Natural killer cell (primary cell): ENCODE measurements at regions of chr1 and their contacts with region 1.

Region 1: GRCh38 chr1:171841050-171841940 is at the start of gene DNM3:
- DNase-seq: peak; percentile 87 to 88
- ATAC-seq: peak; percentile 95 to 96 (median 95)
- H3K4me3 ChIP-seq: peak within 1 kb of the TSS; percentile 85
- H3K4me3 Mint-ChIP-seq: peak within 1 kb of the TSS; percentile 93
- H3K27ac ChIP-seq: peak within 1 kb of the TSS; percentile 25
- H3K27ac Mint-ChIP-seq: peak within 1 kb of the TSS; percentile 76 to 85
- H3K4me1 ChIP-seq: peaks cover 18% of the 10 kb centered on the region
- H3K4me1 Mint-ChIP-seq: peaks cover 18 to 24% of the 10 kb centered on the region in 2 donors
- H3K27me3 ChIP-seq: peaks cover 30% of the 10 kb centered on the region
- H3K27me3 Mint-ChIP-seq: peaks cover 19 to 46% of the 10 kb centered on the region in 2 donors
- CTCF ChIP-seq: no peak
- total RNA-seq, gene DNM3: 2.5 to 3.3 (median 2.8) TPM

Region 2: GRCh38 chr1:171781176-171781875 is 60.0 kb before region 1 on chr1 and contains the start of gene METTL13:
- intact Hi-C with region 1: loop called (anchors 1 kb)
- DNase-seq: peak; percentile 96 to 99
- ATAC-seq: peak; percentile 92 to 98 (median 93)
- H3K4me3 ChIP-seq: peak within 1 kb of the TSS; percentile 90
- H3K4me3 Mint-ChIP-seq: peak within 1 kb of the TSS; percentile 100
- H3K27ac ChIP-seq: peak within 1 kb of the TSS; percentile 80
- H3K27ac Mint-ChIP-seq: peak within 1 kb of the TSS; percentile 98 to 100
- H3K4me1 ChIP-seq: peaks cover 30% of the 10 kb centered on the region
- H3K4me1 Mint-ChIP-seq: peaks cover 49 to 55% of the 10 kb centered on the region in 2 donors
- H3K27me3 ChIP-seq: no peaks in the 10 kb centered on the region
- H3K27me3 Mint-ChIP-seq: peaks cover 1 to 5% of the 10 kb centered on the region in 2 donors
- CTCF ChIP-seq: no peak
- total RNA-seq, gene METTL13: 12.1 to 23.3 (median 18.2) TPM

Region 3: GRCh38 chr1:171913385-171913784 is 72.1 kb after region 1 on chr1:
- intact Hi-C with region 1: no loop called
- DNase-seq: no peak
- ATAC-seq: no peak
- H3K4me3 ChIP-seq: no peak overlapping the region
- H3K4me3 Mint-ChIP-seq: no peak overlapping the region
- H3K27ac ChIP-seq: no peak overlapping the region
- H3K27ac Mint-ChIP-seq: no peak overlapping the region
- H3K4me1 ChIP-seq: no peaks in the 10 kb centered on the region
- H3K4me1 Mint-ChIP-seq: peaks cover 0 to 4% of the 10 kb centered on the region in 2 donors
- H3K27me3 ChIP-seq: no peaks in the 10 kb centered on the region
- H3K27me3 Mint-ChIP-seq: peaks cover 0 to 2% of the 10 kb centered on the region in 2 donors
- CTCF ChIP-seq: no peak

Region 4: DNA sequence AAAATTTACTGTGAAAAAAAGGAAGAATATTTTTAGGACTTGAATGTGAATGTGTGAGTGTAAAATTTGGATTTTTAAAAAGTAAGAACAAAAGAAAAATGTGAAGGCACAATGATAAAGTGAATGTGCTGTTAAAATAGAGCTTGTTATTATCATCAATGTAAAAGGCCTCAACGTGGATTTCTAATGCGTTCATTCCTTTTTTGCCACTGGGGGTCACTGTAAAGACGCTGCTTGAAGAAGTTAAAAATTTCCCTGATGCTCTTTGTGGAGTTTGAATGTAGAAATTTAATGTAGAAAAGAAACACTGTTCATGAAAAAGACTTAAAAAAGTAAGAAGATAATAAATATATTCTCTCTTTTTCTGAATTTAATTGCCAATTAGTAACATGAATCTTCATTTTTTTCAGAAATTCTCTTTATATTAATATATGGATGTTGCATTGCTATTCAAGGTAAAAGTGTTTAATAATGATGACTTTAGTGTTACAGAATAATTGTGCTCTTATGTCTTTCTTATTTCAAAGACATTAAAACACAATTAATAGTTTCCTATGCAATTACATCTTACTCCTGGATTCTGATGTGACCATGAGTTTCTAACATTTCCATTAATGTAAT is 161.5 kb after region 1 on chr1:
- intact Hi-C with region 1: no loop called
- DNase-seq: peak in 1 of 2 donors; percentile 68
- ATAC-seq: peak in 1 of 3 donors; percentile 49
- H3K4me3 ChIP-seq: no peak overlapping the region
- H3K4me3 Mint-ChIP-seq: no peak overlapping the region
- H3K27ac ChIP-seq: no peak overlapping the region
- H3K27ac Mint-ChIP-seq: no peak overlapping the region
- H3K4me1 ChIP-seq: no peaks in the 10 kb centered on the region
- H3K4me1 Mint-ChIP-seq: peaks cover 0 to 8% of the 10 kb centered on the region in 2 donors
- H3K27me3 ChIP-seq: no peaks in the 10 kb centered on the region
- H3K27me3 Mint-ChIP-seq: no peaks in the 10 kb centered on the region
- CTCF ChIP-seq: peak; percentile 55

Region 5: DNA sequence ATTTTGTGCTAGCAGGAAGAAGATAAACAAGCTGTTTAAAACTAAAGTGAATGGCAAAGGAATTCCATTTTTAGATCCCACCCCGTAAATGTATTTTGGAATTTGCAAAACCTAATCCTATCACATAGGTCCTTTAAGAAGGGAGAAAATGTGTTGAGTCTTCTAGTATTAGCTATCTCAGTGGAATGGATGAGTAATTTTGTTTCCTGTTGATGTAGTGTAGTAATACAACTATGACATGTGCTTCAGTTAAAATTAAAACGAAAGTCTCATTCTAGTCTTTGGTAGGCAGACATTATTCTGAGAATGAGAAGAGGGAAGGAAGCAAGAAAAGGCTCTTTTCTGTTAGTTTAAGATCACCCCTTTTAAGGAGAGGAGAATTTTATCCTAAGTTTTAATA is 313.3 kb after region 1 on chr1:
- intact Hi-C with region 1: no loop called
- DNase-seq: peak in 1 of 2 donors; percentile 9
- ATAC-seq: peak in 2 of 3 donors; percentile 54 to 58
- H3K4me3 ChIP-seq: no peak overlapping the region
- H3K4me3 Mint-ChIP-seq: no peak overlapping the region
- H3K27ac ChIP-seq: no peak overlapping the region
- H3K27ac Mint-ChIP-seq: peak overlapping the region in 1 of 2 donors; percentile 36
- H3K4me1 ChIP-seq: no peaks in the 10 kb centered on the region
- H3K4me1 Mint-ChIP-seq: peaks cover 0 to 5% of the 10 kb centered on the region in 2 donors
- H3K27me3 ChIP-seq: no peaks in the 10 kb centered on the region
- H3K27me3 Mint-ChIP-seq: no peaks in the 10 kb centered on the region
- CTCF ChIP-seq: no peak